Activated CD4-positive, alpha-beta T cell treated with anti-CD3 and anti-CD28 coated beads for 36 hours (primary cell): ENCODE measurements at regions of chr1 and their contacts with region 1.

Region 1: DNA sequence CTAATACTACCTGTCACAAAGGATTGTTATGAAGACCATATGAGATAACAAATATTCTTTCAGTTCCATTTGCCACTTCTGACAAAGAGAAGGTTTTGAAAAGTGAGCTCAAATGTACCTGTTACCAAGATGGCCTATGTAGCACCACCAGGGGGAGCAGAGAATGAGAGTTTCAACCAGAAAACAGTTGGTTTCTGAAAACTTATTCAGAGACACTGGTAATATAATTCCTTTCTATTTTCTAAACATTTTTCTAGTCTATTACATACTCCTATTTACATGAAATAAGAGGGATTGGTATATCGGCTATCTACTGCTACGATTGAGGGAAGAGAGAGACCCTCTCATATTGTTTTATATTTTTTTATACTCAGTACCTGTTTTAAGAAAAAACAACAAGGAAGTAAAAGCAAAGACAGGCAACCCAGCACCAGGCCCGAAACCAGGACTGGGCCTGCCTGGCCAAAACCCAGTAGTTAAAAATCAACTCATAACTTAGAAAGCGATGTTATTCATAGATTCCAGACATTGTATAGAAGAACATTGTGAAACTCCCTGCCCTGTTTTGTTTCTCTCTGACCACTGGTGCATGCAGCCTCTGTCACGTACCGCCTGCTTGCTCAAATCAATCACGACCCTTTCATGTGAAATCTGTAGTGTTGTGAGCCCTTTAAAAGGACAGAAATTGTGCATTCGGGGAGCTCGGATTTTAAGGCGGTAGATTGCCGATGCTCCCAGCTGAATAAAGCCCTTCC is 48.3 kb downstream of the IL23R start:
- DNase-seq: peak; percentile 75
- ATAC-seq: peak; percentile 48
- H3K4me3 Mint-ChIP-seq: no peak overlapping the region
- H3K27ac Mint-ChIP-seq: peak overlapping the region; percentile 19
- H3K4me1 Mint-ChIP-seq: peaks cover 46% of the 10 kb centered on the region
- H3K27me3 Mint-ChIP-seq: no peaks in the 10 kb centered on the region

Region 2: GRCh38 chr1:66840929-66841328 is 373.7 kb before region 1 on chr1:
- CTCF ChIA-PET with region 1: no interaction called
- POLR2A ChIA-PET with region 1: no interaction called
- intact Hi-C with region 1: no loop called
- DNase-seq: no peak
- ATAC-seq: no peak
- H3K4me3 Mint-ChIP-seq: no peak overlapping the region
- H3K27ac Mint-ChIP-seq: peak overlapping the region; percentile 52
- H3K4me1 Mint-ChIP-seq: peaks cover 13% of the 10 kb centered on the region
- H3K27me3 Mint-ChIP-seq: no peaks in the 10 kb centered on the region

Region 3: GRCh38 chr1:66893703-66894102 is 320.9 kb before region 1 on chr1:
- CTCF ChIA-PET with region 1: no interaction called
- POLR2A ChIA-PET with region 1: no interaction called
- intact Hi-C with region 1: no loop called
- DNase-seq: no peak
- ATAC-seq: no peak
- H3K4me3 Mint-ChIP-seq: no peak overlapping the region
- H3K27ac Mint-ChIP-seq: no peak overlapping the region
- H3K4me1 Mint-ChIP-seq: no peaks in the 10 kb centered on the region
- H3K27me3 Mint-ChIP-seq: no peaks in the 10 kb centered on the region

Region 4: GRCh38 chr1:67053785-67054772 is 160.5 kb before region 1 on chr1 and contains the start of gene SLC35D1:
- CTCF ChIA-PET with region 1: interaction called, 5 read pairs
- POLR2A ChIA-PET with region 1: interaction called, 3 read pairs
- intact Hi-C with region 1: loop called in 1 of 2 experiments (anchors 5 kb)
- DNase-seq: peak; percentile 77
- ATAC-seq: peak; percentile 79
- H3K4me3 Mint-ChIP-seq: peak within 1 kb of the TSS; percentile 79
- H3K27ac Mint-ChIP-seq: peak within 1 kb of the TSS; percentile 91
- H3K4me1 Mint-ChIP-seq: peaks cover 26% of the 10 kb centered on the region
- H3K27me3 Mint-ChIP-seq: peaks cover 5% of the 10 kb centered on the region
- total RNA-seq, gene SLC35D1: 8.7 to 10.3 TPM

Region 5: DNA sequence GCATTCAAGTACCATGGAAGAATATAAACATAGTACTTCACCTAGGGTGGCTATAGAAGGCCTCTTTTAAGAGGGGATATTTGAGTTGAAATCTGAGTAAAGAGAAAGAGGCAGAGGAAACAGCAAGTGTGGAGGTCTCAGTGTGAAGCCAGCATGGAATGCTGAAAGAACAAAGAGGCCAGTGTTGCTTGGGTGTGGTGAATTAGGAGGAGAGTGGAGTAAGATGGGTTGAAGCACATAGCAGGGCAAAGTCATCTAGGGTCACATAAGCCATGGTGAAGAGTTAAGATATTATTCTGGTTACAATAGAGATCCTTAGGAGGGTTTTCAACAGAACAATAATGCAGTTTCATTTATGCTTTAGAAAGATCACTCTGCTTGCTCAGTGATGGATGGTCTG is 117.3 kb before region 1 on chr1:
- CTCF ChIA-PET with region 1: no interaction called
- POLR2A ChIA-PET with region 1: no interaction called
- intact Hi-C with region 1: no loop called
- DNase-seq: no peak
- ATAC-seq: no peak
- H3K4me3 Mint-ChIP-seq: no peak overlapping the region
- H3K27ac Mint-ChIP-seq: no peak overlapping the region
- H3K4me1 Mint-ChIP-seq: no peaks in the 10 kb centered on the region
- H3K27me3 Mint-ChIP-seq: peaks cover 8% of the 10 kb centered on the region

Region 6: GRCh38 chr1:67174716-67175284 is 39.8 kb before region 1 on chr1:
- CTCF ChIA-PET with region 1: interaction called, 55 read pairs
- POLR2A ChIA-PET with region 1: interaction called, 3 read pairs
- intact Hi-C with region 1: loop called (anchors 1 to 2 kb)
- DNase-seq: peak; percentile 61
- ATAC-seq: peak; percentile 70
- H3K4me3 Mint-ChIP-seq: peak overlapping the region; percentile 25
- H3K27ac Mint-ChIP-seq: peak overlapping the region; percentile 94
- H3K4me1 Mint-ChIP-seq: peaks cover 68% of the 10 kb centered on the region
- H3K27me3 Mint-ChIP-seq: no peaks in the 10 kb centered on the region

Region 7: GRCh38 chr1:67227196-67227595 is 12.6 kb after region 1 on chr1:
- CTCF ChIA-PET with region 1: interaction called, 75 read pairs
- POLR2A ChIA-PET with region 1: no interaction called
- intact Hi-C with region 1: loop called in 1 of 2 experiments (anchors 2 kb)
- DNase-seq: no peak
- ATAC-seq: no peak
- H3K4me3 Mint-ChIP-seq: no peak overlapping the region
- H3K27ac Mint-ChIP-seq: no peak overlapping the region
- H3K4me1 Mint-ChIP-seq: peaks cover 11% of the 10 kb centered on the region
- H3K27me3 Mint-ChIP-seq: no peaks in the 10 kb centered on the region

Region 8: DNA sequence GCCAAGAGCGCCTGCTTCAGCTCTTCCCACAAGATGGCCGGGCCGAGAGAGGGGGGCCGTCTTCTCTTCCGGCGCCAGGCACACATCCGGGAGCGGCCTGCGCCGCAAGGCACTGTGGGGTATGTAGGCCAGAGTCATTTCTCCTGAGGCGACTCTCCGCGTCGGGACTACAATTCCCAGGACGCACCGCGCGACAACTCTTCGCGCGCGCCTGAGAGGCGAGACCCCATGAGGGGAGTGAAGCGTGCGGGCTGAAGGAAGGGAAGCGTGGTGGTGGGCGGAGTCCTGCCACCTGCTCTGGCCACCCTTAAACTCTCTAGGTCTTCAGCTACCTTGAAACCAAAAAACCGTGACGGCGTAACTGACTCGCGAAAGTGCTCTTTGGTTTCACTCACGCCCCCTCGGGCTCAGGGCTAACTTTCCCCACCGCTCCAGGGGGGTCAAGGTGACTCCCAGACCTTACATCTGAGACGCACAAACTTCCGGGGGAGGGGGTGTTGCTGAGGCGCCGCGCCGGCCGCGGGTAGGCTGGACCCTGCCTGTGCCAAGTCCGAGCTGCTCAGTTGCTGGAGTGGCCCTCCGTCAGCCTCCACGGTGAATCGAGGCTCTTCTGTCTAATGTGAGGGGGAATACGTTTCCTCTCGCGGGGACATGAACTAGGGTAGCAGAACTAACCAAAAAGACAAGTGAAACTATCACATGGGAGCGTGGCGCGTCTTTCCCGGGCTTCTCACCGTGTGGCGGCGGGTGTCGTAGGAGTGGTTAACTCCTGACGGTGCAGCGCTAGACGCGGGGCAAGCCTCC is 216.0 kb after region 1 on chr1 and contains the start of gene SERBP1:
- CTCF ChIA-PET with region 1: interaction called, 12 read pairs
- POLR2A ChIA-PET with region 1: no interaction called
- intact Hi-C with region 1: no loop called
- DNase-seq: peak; percentile 97
- ATAC-seq: peak; percentile 91
- H3K4me3 Mint-ChIP-seq: peak within 1 kb of the TSS; percentile 97
- H3K27ac Mint-ChIP-seq: peak within 1 kb of the TSS; percentile 100
- H3K4me1 Mint-ChIP-seq: peaks cover 48% of the 10 kb centered on the region
- H3K27me3 Mint-ChIP-seq: no peaks in the 10 kb centered on the region
- total RNA-seq, gene SERBP1: 433 to 510 TPM